ENCODE measurements at regions of chr1 and their contacts with region 1.

Region 1: GRCh38 chr1:79472067-79472656 is 465.6 kb upstream of the ADGRL4 start:
- DNase-seq: no peak
- ATAC-seq: no peak
- H3K4me3 ChIP-seq: no peak overlapping the region
- H3K27ac ChIP-seq: no peak overlapping the region
- H3K4me1 ChIP-seq: no peaks in the 10 kb centered on the region
- H3K27me3 ChIP-seq: no peaks in the 10 kb centered on the region
- CTCF ChIP-seq: no peak

Region 2: DNA sequence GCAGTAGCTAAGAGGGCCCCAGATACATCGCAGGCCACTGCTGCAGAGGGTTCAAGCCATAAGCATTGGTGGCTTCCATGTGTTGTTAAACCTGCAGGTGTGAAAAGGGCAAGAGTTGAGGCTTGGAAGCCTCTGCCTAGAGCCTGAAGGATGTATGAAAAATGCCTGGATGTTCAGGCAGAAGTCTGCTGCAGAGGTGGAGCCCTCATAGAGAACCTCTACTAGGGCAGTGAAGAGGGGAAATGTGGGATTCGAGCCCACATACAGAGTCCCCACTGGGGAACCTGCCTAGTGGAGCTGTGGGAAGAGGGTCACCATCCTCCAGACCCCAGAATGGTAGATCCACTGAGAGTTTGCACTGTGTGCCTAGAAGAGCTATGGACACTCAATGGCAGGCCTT is 435.1 kb before region 1 on chr1:
- CTCF ChIA-PET with region 1: no interaction called
- POLR2A ChIA-PET with region 1: no interaction called
- in situ Hi-C with region 1: no loop called
- intact Hi-C with region 1: no loop called
- DNase-seq: no peak
- ATAC-seq: no peak
- H3K4me3 ChIP-seq: no peak overlapping the region
- H3K27ac ChIP-seq: no peak overlapping the region
- H3K4me1 ChIP-seq: no peaks in the 10 kb centered on the region
- H3K27me3 ChIP-seq: no peaks in the 10 kb centered on the region
- CTCF ChIP-seq: no peak

Region 3: DNA sequence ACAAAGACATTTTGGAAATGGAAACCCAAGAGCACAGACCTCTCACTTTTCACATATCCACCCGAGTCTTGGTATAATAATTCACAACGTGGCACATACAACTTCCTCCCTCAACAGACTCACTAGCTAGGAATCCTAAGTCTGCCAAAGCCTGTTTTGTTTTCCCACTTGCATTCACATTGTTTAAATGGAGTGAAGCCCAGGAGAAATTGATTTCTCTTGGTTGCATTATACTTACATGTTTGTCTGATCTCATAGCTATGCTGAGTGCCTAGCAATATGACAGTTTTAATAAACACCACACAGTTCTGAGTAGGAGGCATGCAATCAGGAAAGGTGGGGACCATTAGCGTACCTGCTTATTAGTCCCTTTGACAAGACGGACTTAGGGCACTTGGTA is 117.1 kb before region 1 on chr1:
- CTCF ChIA-PET with region 1: no interaction called
- POLR2A ChIA-PET with region 1: no interaction called
- in situ Hi-C with region 1: no loop called
- intact Hi-C with region 1: no loop called
- DNase-seq: no peak
- ATAC-seq: no peak
- H3K4me3 ChIP-seq: no peak overlapping the region
- H3K27ac ChIP-seq: no peak overlapping the region
- H3K4me1 ChIP-seq: no peaks in the 10 kb centered on the region
- H3K27me3 ChIP-seq: no peaks in the 10 kb centered on the region
- CTCF ChIP-seq: no peak

Region 4: GRCh38 chr1:79519084-79519760 is 47.1 kb after region 1 on chr1:
- CTCF ChIA-PET with region 1: no interaction called
- POLR2A ChIA-PET with region 1: no interaction called
- in situ Hi-C with region 1: no loop called
- intact Hi-C with region 1: no loop called
- DNase-seq: no peak
- ATAC-seq: no peak
- H3K4me3 ChIP-seq: no peak overlapping the region
- H3K27ac ChIP-seq: no peak overlapping the region
- H3K4me1 ChIP-seq: no peaks in the 10 kb centered on the region
- H3K27me3 ChIP-seq: no peaks in the 10 kb centered on the region
- CTCF ChIP-seq: no peak

Region 5: DNA sequence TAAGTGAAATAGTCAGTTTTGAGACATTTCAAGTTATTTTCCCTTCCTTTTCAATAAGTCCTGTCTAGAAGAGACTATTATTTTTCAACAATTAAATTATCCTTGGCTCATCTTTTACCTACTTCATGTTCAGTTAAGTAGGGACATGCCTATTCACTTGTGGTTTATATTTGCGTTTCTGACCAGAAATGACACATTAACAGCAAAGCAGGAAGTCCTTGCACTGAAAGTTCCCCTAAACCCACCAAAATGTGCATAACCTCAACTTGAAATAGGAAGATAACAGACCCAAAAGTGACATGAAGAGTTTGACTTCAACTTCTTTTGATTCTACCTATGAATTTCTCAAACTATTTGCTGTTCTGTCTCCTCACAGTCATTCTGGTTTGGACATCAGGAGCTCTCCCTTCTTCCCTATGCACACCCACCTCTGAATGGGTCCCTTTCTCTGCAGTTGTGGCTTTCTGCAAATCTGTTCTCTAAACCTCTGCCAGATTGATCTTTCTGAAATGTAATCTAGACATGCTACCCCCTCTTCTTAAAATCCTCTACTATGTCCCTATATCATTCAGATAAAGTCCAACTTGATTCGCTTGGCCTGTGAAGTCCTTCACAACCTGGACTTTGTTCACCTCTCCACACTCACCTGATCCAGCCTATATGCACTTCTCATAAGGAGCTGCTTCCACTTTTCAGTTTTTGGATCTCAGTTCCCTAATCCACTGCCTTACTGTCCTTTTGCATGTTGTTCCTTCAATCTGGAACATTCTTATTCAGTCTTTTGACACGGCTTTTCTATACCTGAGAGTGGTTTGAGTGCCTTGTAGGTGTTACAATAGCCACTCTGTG is 195.9 kb after region 1 on chr1:
- CTCF ChIA-PET with region 1: no interaction called
- POLR2A ChIA-PET with region 1: interaction called, 12 read pairs
- in situ Hi-C with region 1: no loop called
- intact Hi-C with region 1: no loop called
- DNase-seq: no peak
- ATAC-seq: no peak
- H3K4me3 ChIP-seq: no peak overlapping the region
- H3K27ac ChIP-seq: no peak overlapping the region
- H3K4me1 ChIP-seq: no peaks in the 10 kb centered on the region
- H3K27me3 ChIP-seq: no peaks in the 10 kb centered on the region
- CTCF ChIP-seq: no peak

Measured in Panc1 (cell line).